Lower leg skin (tissue), 4 donors: ENCODE measurements at regions of chr9 and their contacts with region 1.

Region 1: GRCh38 chr9:6096821-6097220 is 81.4 kb upstream of the RANBP6 start:
- DNase-seq: no peak
- H3K4me3 ChIP-seq: no peak overlapping the region
- CTCF ChIP-seq: no peak
- POLR2A ChIP-seq: no peak

Region 2: GRCh38 chr9:4583001-4583400 is 1513.8 kb before region 1 on chr9:
- intact Hi-C with region 1: loop called (anchors 10 kb)
- DNase-seq: no peak
- H3K4me3 ChIP-seq: no peak overlapping the region
- CTCF ChIP-seq: no peak
- POLR2A ChIP-seq: no peak

Region 3: DNA sequence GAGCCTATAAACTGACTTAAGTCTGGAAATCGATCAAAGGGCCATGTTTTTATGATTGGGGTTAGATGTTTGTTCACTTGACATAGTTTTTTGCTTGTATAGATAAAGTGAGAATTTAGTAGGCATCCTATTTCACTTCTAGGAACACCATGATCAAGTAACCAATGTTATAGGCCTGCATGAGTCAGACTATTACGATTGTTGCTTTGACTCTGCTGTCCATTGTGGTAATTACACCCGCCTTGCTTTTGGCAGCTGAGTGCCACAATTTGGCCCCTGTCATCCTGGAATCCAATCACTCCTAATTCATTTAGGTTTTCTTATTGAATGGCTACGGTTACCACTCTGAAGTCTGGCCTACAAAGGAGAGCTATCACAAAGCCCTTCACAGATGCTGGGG is 51.0 kb after region 1 on chr9:
- intact Hi-C with region 1: no loop called
- DNase-seq: no peak
- H3K4me3 ChIP-seq: no peak overlapping the region
- CTCF ChIP-seq: no peak
- POLR2A ChIP-seq: no peak